ENCODE measurements at regions of chrX and their contacts with region 1.

Region 1: DNA sequence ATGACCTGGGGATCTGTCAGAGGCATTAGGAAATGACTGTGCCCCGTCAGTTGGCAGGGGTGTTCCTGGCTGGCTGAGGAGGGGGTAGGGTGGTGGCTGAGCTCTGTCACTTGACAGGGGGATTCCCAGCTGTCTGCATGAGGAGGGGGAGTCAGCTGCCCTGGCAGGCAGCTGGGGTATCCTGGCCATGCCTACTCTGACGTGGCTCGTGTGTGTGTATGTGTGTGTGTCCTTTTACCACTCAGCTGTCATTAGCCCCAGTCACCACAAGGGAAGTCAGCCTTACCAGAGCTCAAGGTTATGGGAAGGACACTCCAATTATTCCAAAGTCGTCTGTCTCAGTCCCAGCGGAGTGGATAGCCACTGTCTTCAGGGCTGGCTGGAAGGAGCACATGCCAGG is 93.2 kb downstream of the EFNB1 start:
- DNase-seq: no peak
- H3K4me3 ChIP-seq: no peak overlapping the region
- H3K27ac ChIP-seq: no peak overlapping the region
- H3K27me3 ChIP-seq: no peaks in the 10 kb centered on the region
- CTCF ChIP-seq: no peak

Region 2: GRCh38 chrX:68789976-68790375 is 132.1 kb before region 1 on chrX:
- CTCF ChIA-PET with region 1: no interaction called
- POLR2A ChIA-PET with region 1: no interaction called
- DNase-seq: no peak
- H3K4me3 ChIP-seq: no peak overlapping the region
- H3K27ac ChIP-seq: no peak overlapping the region
- H3K27me3 ChIP-seq: no peaks in the 10 kb centered on the region
- CTCF ChIP-seq: no peak

Region 3: DNA sequence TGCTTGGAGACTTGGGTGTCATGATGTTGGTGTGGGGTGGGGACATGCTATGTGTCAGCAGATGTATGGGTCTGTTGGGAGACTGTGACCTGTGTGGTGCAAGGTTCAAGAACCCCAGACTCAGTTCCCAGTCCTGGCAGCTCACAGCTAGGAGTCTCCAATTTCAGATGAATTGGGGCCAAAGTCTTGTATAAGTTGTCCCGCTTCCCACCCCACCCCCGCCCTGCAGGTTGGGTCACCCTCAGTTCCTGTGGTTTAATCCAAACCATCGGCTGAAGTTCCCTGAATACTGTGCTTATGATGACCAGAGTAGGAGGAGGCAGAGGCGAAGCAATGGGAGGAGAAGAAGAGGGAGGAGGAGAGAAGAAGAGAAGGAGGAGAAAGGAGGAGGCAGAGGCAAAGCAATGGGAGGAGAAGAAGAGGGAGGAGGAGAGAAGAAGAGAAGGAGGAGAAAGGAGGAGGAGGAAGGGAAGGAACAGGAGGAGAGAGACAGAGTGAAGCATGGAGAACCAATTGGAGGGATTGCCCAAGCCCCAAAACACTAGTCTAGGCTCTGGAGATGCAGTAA is 19.4 kb after region 1 on chrX:
- CTCF ChIA-PET with region 1: interaction called, 16 read pairs
- POLR2A ChIA-PET with region 1: no interaction called
- DNase-seq: no peak
- H3K4me3 ChIP-seq: no peak overlapping the region
- H3K27ac ChIP-seq: no peak overlapping the region
- H3K27me3 ChIP-seq: no peaks in the 10 kb centered on the region
- CTCF ChIP-seq: no peak